ENCODE measurements at regions of chr22 and their contacts with region 1.

Region 1: GRCh38 chr22:24156913-24157821 is 24.1 kb upstream of the SUSD2 start:
- DNase-seq: peak; percentile 77 to 95 (median 87)
- ATAC-seq: peak; percentile 77
- H3K4me3 ChIP-seq: peak overlapping the region; percentile 70
- H3K4me3 Mint-ChIP-seq: peak overlapping the region; percentile 99
- H3K27ac ChIP-seq: peak overlapping the region; percentile 48 to 94
- H3K27ac Mint-ChIP-seq: peak overlapping the region; percentile 98
- H3K4me1 ChIP-seq: peaks cover 83% of the 10 kb centered on the region
- H3K4me1 Mint-ChIP-seq: peaks cover 89% of the 10 kb centered on the region
- H3K27me3 ChIP-seq: no peaks in the 10 kb centered on the region
- H3K27me3 Mint-ChIP-seq: no peaks in the 10 kb centered on the region
- CTCF ChIP-seq: peak; percentile 81

Region 2: GRCh38 chr22:24011735-24012068 is 145.5 kb before region 1 on chr22:
- CTCF ChIA-PET with region 1: interaction called, 5 read pairs
- POLR2A ChIA-PET with region 1: interaction called, 22 read pairs
- intact Hi-C with region 1: no loop called
- DNase-seq: no peak
- ATAC-seq: no peak
- H3K4me3 ChIP-seq: peak overlapping the region; percentile 99
- H3K4me3 Mint-ChIP-seq: peak overlapping the region; percentile 99
- H3K27ac ChIP-seq: peak overlapping the region; percentile 73 to 86
- H3K27ac Mint-ChIP-seq: peak overlapping the region; percentile 94
- H3K4me1 ChIP-seq: peaks cover 22% of the 10 kb centered on the region
- H3K4me1 Mint-ChIP-seq: peaks cover 48% of the 10 kb centered on the region
- H3K27me3 ChIP-seq: no peaks in the 10 kb centered on the region
- H3K27me3 Mint-ChIP-seq: no peaks in the 10 kb centered on the region
- CTCF ChIP-seq: no peak

Region 3: DNA sequence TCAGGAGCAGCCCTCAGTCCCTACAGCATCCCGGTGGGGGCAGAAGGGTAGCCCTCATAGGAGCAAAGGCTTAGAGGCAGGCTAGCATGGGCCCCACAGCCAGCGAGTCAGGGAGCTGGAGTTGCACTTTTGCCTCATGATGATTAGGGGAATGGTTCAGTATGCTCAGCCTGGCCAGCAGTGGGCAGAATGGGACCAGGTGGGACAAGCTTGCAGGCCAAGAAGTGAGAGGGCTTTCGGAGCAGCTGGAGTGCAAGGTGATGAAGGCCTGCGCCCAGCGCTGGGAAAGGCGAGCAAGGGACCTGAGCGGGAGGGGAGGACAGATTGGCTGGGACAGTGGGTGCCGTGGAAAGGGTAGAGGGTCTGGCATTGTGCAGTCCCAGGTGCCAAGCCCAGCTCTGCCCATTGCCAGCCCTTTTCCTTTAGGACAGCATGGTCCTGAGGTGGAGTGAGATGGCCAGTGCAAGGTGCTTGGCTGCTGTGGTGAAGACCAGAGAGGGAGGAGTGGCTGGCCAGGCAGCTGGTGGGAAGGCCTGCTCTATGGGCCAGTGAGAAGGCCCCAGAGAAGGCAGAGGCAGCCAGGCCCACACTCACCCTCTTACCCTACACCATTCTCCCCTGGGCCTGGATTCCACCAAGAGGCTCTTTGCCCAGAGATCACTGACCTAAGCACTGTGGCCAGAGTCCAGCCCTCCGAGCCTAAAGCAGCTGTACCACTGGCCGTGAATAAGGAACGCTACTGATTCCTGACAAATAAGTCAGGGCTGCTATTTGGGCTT is 23.8 kb before region 1 on chr22:
- CTCF ChIA-PET with region 1: interaction called, 27 read pairs
- POLR2A ChIA-PET with region 1: interaction called, 90 read pairs
- intact Hi-C with region 1: loop called in 1 of 2 experiments (anchors 1 kb)
- DNase-seq: peak; percentile 30 to 73 (median 48)
- ATAC-seq: peak; percentile 50
- H3K4me3 ChIP-seq: no peak overlapping the region
- H3K4me3 Mint-ChIP-seq: no peak overlapping the region
- H3K27ac ChIP-seq: no peak overlapping the region
- H3K27ac Mint-ChIP-seq: peak overlapping the region; percentile 92
- H3K4me1 ChIP-seq: peaks cover 18% of the 10 kb centered on the region
- H3K4me1 Mint-ChIP-seq: peaks cover 23% of the 10 kb centered on the region
- H3K27me3 ChIP-seq: no peaks in the 10 kb centered on the region
- H3K27me3 Mint-ChIP-seq: no peaks in the 10 kb centered on the region
- CTCF ChIP-seq: peak; percentile 58

Region 4: GRCh38 chr22:24140357-24140756 is 16.8 kb before region 1 on chr22:
- CTCF ChIA-PET with region 1: interaction called, 27 read pairs
- POLR2A ChIA-PET with region 1: interaction called, 90 read pairs
- intact Hi-C with region 1: loop called in 1 of 2 experiments (anchors 2 kb)
- DNase-seq: peak in 2 of 14 experiments; percentile 13 to 25
- ATAC-seq: no peak
- H3K4me3 ChIP-seq: no peak overlapping the region
- H3K4me3 Mint-ChIP-seq: no peak overlapping the region
- H3K27ac ChIP-seq: no peak overlapping the region
- H3K27ac Mint-ChIP-seq: peak overlapping the region; percentile 88
- H3K4me1 ChIP-seq: peaks cover 60% of the 10 kb centered on the region
- H3K4me1 Mint-ChIP-seq: peaks cover 68% of the 10 kb centered on the region
- H3K27me3 ChIP-seq: no peaks in the 10 kb centered on the region
- H3K27me3 Mint-ChIP-seq: no peaks in the 10 kb centered on the region
- CTCF ChIP-seq: no peak

Region 5: DNA sequence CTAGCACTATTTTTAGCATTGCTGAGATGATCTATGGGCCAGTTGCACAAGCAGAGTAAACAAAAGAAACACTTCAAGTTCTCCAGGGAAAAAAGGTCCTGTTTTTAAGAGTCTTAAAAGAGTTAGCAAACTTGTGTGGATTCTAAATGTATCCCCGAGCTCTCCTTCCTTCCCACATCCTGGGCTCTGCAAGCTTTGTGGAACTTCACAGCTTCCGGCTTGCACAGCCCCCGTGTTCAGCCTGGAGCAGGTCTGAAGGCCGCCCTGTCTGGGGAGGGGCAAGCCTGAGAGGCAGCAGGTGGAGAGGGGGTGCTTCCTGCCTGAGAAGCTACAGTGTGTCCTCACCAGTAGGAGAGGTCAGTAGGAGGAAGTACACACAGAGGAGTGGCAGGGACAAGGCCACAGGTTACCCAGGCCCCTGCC is 11.0 kb before region 1 on chr22:
- CTCF ChIA-PET with region 1: interaction called, 23 read pairs
- POLR2A ChIA-PET with region 1: interaction called, 49 read pairs
- intact Hi-C with region 1: loop called in 1 of 2 experiments (anchors 2 kb)
- DNase-seq: peak in 9 of 14 experiments; percentile 31 to 68 (median 51)
- ATAC-seq: peak; percentile 83
- H3K4me3 ChIP-seq: no peak overlapping the region
- H3K4me3 Mint-ChIP-seq: peak overlapping the region; percentile 59
- H3K27ac ChIP-seq: no peak overlapping the region
- H3K27ac Mint-ChIP-seq: peak overlapping the region; percentile 88
- H3K4me1 ChIP-seq: peaks cover 86% of the 10 kb centered on the region
- H3K4me1 Mint-ChIP-seq: peaks cover 89% of the 10 kb centered on the region
- H3K27me3 ChIP-seq: no peaks in the 10 kb centered on the region
- H3K27me3 Mint-ChIP-seq: no peaks in the 10 kb centered on the region
- CTCF ChIP-seq: no peak

Region 6: GRCh38 chr22:24175160-24175808 is 18.1 kb after region 1 on chr22:
- CTCF ChIA-PET with region 1: interaction called, 4 read pairs
- POLR2A ChIA-PET with region 1: interaction called, 38 read pairs
- intact Hi-C with region 1: no loop called
- DNase-seq: peak; percentile 41 to 79 (median 61)
- ATAC-seq: peak; percentile 68
- H3K4me3 ChIP-seq: no peak overlapping the region
- H3K4me3 Mint-ChIP-seq: no peak overlapping the region
- H3K27ac ChIP-seq: peak overlapping the region in 1 of 2 donors; percentile 21
- H3K27ac Mint-ChIP-seq: no peak overlapping the region
- H3K4me1 ChIP-seq: no peaks in the 10 kb centered on the region
- H3K4me1 Mint-ChIP-seq: no peaks in the 10 kb centered on the region
- H3K27me3 ChIP-seq: no peaks in the 10 kb centered on the region
- H3K27me3 Mint-ChIP-seq: no peaks in the 10 kb centered on the region
- CTCF ChIP-seq: peak; percentile 71

Region 7: GRCh38 chr22:24187731-24188644 is 30.8 kb after region 1 on chr22:
- CTCF ChIA-PET with region 1: no interaction called
- POLR2A ChIA-PET with region 1: no interaction called
- intact Hi-C with region 1: no loop called
- DNase-seq: peak in 1 of 14 experiments; percentile 14
- ATAC-seq: no peak
- H3K4me3 ChIP-seq: no peak overlapping the region
- H3K4me3 Mint-ChIP-seq: no peak overlapping the region
- H3K27ac ChIP-seq: no peak overlapping the region
- H3K27ac Mint-ChIP-seq: no peak overlapping the region
- H3K4me1 ChIP-seq: peaks cover 6% of the 10 kb centered on the region
- H3K4me1 Mint-ChIP-seq: no peaks in the 10 kb centered on the region
- H3K27me3 ChIP-seq: no peaks in the 10 kb centered on the region
- H3K27me3 Mint-ChIP-seq: no peaks in the 10 kb centered on the region
- CTCF ChIP-seq: no peak

Region 8: DNA sequence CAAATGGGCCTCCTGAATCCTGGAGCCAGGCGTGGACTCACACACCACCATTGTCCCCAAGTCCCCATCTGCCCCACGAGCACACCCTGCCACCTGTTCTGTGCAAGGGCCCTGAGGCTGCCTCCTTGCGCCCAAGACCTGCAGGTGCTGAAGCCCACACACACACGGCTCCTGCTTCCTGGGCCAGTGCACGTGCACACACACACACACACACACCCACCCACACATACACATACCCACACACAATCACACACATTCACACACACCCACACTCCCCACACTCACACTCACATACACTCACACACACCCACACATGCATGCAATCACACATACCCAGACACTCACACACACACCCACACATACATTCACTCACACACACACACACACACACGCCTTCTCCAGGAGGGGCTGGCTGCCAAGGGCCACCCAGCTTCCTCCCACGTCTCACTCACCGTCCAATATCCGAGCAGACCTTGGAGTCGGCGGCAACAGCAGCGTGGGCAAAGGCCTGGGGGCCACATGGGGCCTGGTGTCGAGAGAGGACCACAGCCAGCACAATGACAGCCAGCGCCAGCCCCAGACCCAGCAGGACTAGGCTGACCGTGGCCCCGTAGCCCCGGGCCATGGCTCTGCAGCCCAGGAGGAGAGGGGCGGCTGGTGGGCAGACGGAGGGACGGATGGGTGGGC is 87.1 kb after region 1 on chr22:
- CTCF ChIA-PET with region 1: no interaction called
- POLR2A ChIA-PET with region 1: interaction called, 31 read pairs
- intact Hi-C with region 1: no loop called
- DNase-seq: peak in 1 of 14 experiments; percentile 3
- ATAC-seq: no peak
- H3K4me3 ChIP-seq: no peak overlapping the region
- H3K4me3 Mint-ChIP-seq: peak overlapping the region; percentile 63
- H3K27ac ChIP-seq: no peak overlapping the region
- H3K27ac Mint-ChIP-seq: peak overlapping the region; percentile 36
- H3K4me1 ChIP-seq: peaks cover 30% of the 10 kb centered on the region
- H3K4me1 Mint-ChIP-seq: peaks cover 29% of the 10 kb centered on the region
- H3K27me3 ChIP-seq: no peaks in the 10 kb centered on the region
- H3K27me3 Mint-ChIP-seq: no peaks in the 10 kb centered on the region
- CTCF ChIP-seq: no peak

Region 9: GRCh38 chr22:24315367-24315966 is 158.3 kb after region 1 on chr22:
- CTCF ChIA-PET with region 1: no interaction called
- POLR2A ChIA-PET with region 1: no interaction called
- intact Hi-C with region 1: no loop called
- DNase-seq: no peak
- ATAC-seq: no peak
- H3K4me3 ChIP-seq: no peak overlapping the region
- H3K4me3 Mint-ChIP-seq: no peak overlapping the region
- H3K27ac ChIP-seq: no peak overlapping the region
- H3K27ac Mint-ChIP-seq: peak overlapping the region; percentile 24
- H3K4me1 ChIP-seq: no peaks in the 10 kb centered on the region
- H3K4me1 Mint-ChIP-seq: peaks cover 11% of the 10 kb centered on the region
- H3K27me3 ChIP-seq: no peaks in the 10 kb centered on the region
- H3K27me3 Mint-ChIP-seq: no peaks in the 10 kb centered on the region
- CTCF ChIP-seq: no peak